Pancreas (tissue), 10 donors: ENCODE measurements at regions of chr2 and their contacts with region 1.

Region 1: DNA sequence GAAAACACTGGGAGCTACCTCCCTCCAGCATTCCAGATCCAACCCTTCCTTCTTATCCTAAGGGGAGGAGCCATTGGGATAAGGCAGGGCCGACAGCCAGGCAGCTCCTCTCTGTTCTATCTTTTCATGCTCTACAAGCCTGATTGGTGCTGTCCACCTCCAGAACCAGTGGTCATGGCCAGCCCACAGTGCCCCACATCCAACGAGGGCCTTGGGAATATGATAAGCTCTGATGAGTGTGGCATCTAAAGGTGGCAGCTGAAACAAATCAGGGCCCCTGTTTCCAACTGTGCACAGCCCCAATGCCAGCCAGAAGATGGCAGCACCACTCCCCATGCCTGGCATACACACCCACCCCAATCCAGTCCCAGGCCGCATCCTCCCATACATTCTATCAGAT is 329.3 kb downstream of the C1D start:
- DNase-seq: peak; percentile 42 to 69 (median 57)
- ATAC-seq: peak; percentile 91 to 98 (median 96)
- H3K4me3 ChIP-seq: no peak overlapping the region
- H3K27ac ChIP-seq: no peak overlapping the region
- H3K4me1 ChIP-seq: peaks cover 0 to 7% (median 0%) of the 10 kb centered on the region in 3 donors
- H3K27me3 ChIP-seq: no peaks in the 10 kb centered on the region
- CTCF ChIP-seq: peak in 3 of 4 donors; percentile 31 to 46 (median 40)

Region 2: GRCh38 chr2:67840460-67841068 is 107.0 kb after region 1 on chr2:
- intact Hi-C with region 1: loop called in 2 of 3 experiments (anchors 5 to 10 kb)
- DNase-seq: peak; percentile 80 to 91 (median 82)
- ATAC-seq: peak; percentile 86 to 94 (median 90)
- H3K4me3 ChIP-seq: no peak overlapping the region
- H3K27ac ChIP-seq: no peak overlapping the region
- H3K4me1 ChIP-seq: peaks cover 22 to 34% (median 34%) of the 10 kb centered on the region in 3 donors
- H3K27me3 ChIP-seq: no peaks in the 10 kb centered on the region
- CTCF ChIP-seq: peak; percentile 45 to 86 (median 75)